T-cell (primary cell): ENCODE measurements at regions of chr3 and their contacts with region 1.

Region 1: DNA sequence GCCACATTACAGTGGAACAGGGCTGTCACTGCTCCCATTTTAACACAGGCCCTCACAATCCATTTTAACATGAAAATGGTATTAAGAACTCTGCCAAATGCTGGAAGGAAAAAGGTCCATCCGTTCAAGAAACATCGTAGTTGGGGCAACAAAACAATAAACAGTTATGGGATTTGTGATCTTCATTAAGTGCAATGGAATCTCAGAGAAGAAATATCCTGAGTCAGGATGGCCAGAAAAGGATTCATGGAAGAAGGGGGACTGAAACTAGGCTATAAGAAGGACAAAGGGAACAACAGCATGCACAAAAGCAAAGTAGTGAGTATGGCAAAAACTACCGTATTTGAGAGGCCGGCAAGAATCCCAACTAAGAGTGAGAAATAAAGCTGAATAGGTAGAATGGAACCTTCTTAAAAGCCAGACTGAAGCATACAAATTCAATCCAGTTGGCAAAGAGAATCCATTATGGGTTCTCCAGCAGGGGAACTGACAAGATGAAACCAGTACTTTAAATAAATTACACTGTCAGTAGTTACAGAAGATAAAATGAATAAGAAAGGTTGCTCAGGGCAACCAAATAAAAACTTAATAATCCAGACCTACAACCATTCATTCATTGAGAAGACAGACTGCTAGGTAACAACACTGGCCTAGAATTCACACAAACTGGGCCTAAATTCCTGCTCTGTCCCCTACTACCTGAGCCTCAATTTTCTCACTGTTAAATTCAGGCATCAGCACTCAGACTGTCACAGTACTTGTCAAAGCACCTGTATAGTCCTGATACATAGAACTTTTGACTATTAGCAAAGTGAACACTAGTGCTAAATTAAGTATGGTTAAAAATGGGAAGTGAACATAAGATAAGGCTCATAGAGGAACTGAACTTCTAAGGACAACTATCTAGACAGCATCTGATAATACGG is 6.3 kb downstream of the TBL1XR1 start:
- DNase-seq: no peak
- ATAC-seq: no peak
- H3K4me3 ChIP-seq: no peak overlapping the region
- H3K4me3 Mint-ChIP-seq: peak overlapping the region; percentile 2 to 67 (median 34)
- H3K27ac ChIP-seq: peak overlapping the region; percentile 1
- H3K27ac Mint-ChIP-seq: peak overlapping the region; percentile 3 to 49
- H3K4me1 ChIP-seq: peaks cover 25 to 37% of the 10 kb centered on the region in 2 experiments
- H3K4me1 Mint-ChIP-seq: peaks cover 75 to 80% (median 80%) of the 10 kb centered on the region in 3 donors
- H3K27me3 ChIP-seq: no peaks in the 10 kb centered on the region
- H3K27me3 Mint-ChIP-seq: no peaks in the 10 kb centered on the region

Region 2: DNA sequence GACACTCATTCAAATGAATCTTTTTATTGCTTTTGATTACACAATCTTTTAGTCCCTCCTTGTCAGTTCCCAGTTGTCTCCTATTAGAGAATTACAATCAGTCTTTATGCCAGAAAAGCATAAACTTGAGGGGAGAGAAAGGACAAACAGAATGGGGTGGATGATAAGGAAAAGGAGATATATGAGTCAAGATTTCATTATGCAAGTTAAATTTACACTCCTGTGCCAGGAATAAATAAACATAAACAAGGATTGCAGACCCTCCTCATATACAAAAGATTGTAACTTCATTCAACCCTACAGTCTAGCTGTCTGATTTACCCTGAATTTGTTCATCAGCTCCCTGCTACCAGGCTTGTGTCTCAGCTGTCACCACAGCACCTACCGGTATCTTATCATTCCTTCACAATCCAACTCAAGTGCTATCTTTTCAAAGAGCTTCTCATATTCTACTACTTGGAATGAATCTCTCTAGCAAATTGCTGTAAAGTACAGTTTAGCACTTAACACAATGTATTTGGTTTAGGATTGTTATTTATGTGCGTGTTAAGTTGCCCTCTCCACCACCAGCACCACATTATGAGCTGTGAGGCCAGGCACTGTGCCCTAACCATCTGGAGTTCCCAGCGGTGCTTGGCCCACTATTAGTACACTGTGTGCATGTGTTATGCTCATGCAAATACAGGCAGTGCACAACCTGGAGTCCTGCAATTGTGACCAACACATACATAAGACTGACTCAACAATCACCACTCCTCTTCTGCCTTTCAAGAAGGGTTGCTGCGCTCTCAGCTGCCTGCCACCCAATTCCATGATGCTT is 497.8 kb before region 1 on chr3:
- CTCF ChIA-PET with region 1: no interaction called
- POLR2A ChIA-PET with region 1: no interaction called
- DNase-seq: no peak
- ATAC-seq: no peak
- H3K4me3 ChIP-seq: no peak overlapping the region
- H3K4me3 Mint-ChIP-seq: no peak overlapping the region
- H3K27ac ChIP-seq: no peak overlapping the region
- H3K27ac Mint-ChIP-seq: no peak overlapping the region
- H3K4me1 ChIP-seq: no peaks in the 10 kb centered on the region
- H3K4me1 Mint-ChIP-seq: no peaks in the 10 kb centered on the region
- H3K27me3 ChIP-seq: no peaks in the 10 kb centered on the region
- H3K27me3 Mint-ChIP-seq: peaks cover 0 to 2% of the 10 kb centered on the region in 2 donors

Region 3: DNA sequence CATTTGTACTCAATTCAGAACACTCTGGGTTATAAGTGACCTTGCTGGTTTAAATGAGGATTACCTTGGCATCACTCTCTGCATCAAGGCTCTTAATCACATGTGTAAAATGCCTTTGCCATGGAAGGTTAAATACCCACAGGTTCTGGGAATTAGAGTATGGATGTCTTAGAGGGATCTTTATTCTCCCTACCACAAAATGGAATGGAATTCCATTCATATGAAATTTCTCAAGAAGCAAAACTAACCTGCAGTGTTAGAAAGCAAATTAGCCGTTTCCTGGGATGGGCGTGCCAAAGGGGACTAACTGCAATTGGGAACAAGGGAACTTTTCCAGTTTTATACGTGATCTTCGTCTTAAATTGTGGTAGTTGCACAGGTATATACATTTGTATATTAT is 33.5 kb before region 1 on chr3:
- CTCF ChIA-PET with region 1: interaction called in 1 of 2 experiments, 10 read pairs
- POLR2A ChIA-PET with region 1: interaction called, 3 read pairs
- DNase-seq: no peak
- ATAC-seq: no peak
- H3K4me3 ChIP-seq: no peak overlapping the region
- H3K4me3 Mint-ChIP-seq: no peak overlapping the region
- H3K27ac ChIP-seq: no peak overlapping the region
- H3K27ac Mint-ChIP-seq: no peak overlapping the region
- H3K4me1 ChIP-seq: peaks cover 0 to 20% of the 10 kb centered on the region in 2 experiments
- H3K4me1 Mint-ChIP-seq: peaks cover 68 to 72% (median 70%) of the 10 kb centered on the region in 3 donors
- H3K27me3 ChIP-seq: no peaks in the 10 kb centered on the region
- H3K27me3 Mint-ChIP-seq: no peaks in the 10 kb centered on the region

Region 4: DNA sequence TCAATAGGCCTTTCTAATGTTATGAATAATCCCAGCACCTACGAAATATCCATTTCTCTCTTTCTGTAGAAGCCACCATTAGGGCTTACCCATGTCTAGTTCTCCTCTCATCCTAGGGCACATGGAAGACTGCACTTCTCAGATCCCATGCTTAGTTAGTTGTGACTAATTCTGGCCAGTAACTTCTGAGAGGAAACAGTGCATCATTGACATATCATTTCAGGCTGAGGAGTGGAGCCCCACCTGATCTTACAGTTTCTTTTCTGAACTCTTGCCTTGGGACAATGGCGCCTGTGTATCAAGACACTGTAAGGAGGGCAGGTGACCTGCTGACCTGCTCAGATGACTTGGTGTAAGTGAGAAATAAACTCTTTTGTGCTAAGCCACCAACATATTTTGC is 45.7 kb after region 1 on chr3:
- CTCF ChIA-PET with region 1: no interaction called
- POLR2A ChIA-PET with region 1: interaction called in 1 of 2 experiments, 12 read pairs
- DNase-seq: no peak
- ATAC-seq: no peak
- H3K4me3 ChIP-seq: no peak overlapping the region
- H3K4me3 Mint-ChIP-seq: no peak overlapping the region
- H3K27ac ChIP-seq: no peak overlapping the region
- H3K27ac Mint-ChIP-seq: no peak overlapping the region
- H3K4me1 ChIP-seq: no peaks in the 10 kb centered on the region
- H3K4me1 Mint-ChIP-seq: peaks cover 6 to 7% (median 7%) of the 10 kb centered on the region in 3 donors
- H3K27me3 ChIP-seq: no peaks in the 10 kb centered on the region
- H3K27me3 Mint-ChIP-seq: no peaks in the 10 kb centered on the region